ENCODE measurements at regions of chr12 and their contacts with region 1.

Region 1: GRCh38 chr12:46268590-46269558 is at the start of gene SLC38A1:
- DNase-seq: peak; percentile 77 to 96 (median 88)
- ATAC-seq: peak; percentile 67 to 72
- H3K4me3 Mint-ChIP-seq: no peak within 1 kb of the TSS
- H3K27ac Mint-ChIP-seq: no peak within 1 kb of the TSS
- H3K4me1 Mint-ChIP-seq: peaks cover 19 to 44% (median 38%) of the 10 kb centered on the region in 4 donors
- H3K27me3 Mint-ChIP-seq: no peaks in the 10 kb centered on the region
- polyA plus RNA-seq, gene SLC38A1: 255 to 308 (median 264) TPM

Region 2: GRCh38 chr12:45990468-45991283 is 278.2 kb before region 1 on chr12 and contains the start of gene SCAF11:
- POLR2A ChIA-PET with region 1: interaction called, 37 read pairs
- DNase-seq: peak; percentile 100
- ATAC-seq: peak; percentile 71 to 76
- H3K4me3 Mint-ChIP-seq: peak within 1 kb of the TSS; percentile 89 to 100 (median 96)
- H3K27ac Mint-ChIP-seq: peak within 1 kb of the TSS; percentile 93 to 100 (median 100)
- H3K4me1 Mint-ChIP-seq: peaks cover 33 to 52% (median 43%) of the 10 kb centered on the region in 4 donors
- H3K27me3 Mint-ChIP-seq: peaks cover 0 to 4% (median 0%) of the 10 kb centered on the region in 5 donors
- polyA plus RNA-seq, gene SCAF11: 71.1 to 93.5 (median 89.1) TPM

Region 3: GRCh38 chr12:46177837-46178608 is 90.9 kb before region 1 on chr12:
- POLR2A ChIA-PET with region 1: interaction called, 11 read pairs
- DNase-seq: peak in 6 of 10 donors; percentile 23 to 67 (median 35)
- ATAC-seq: peak; percentile 77 to 92
- H3K4me3 Mint-ChIP-seq: peak overlapping the region; percentile 19 to 81 (median 71)
- H3K27ac Mint-ChIP-seq: peak overlapping the region; percentile 8 to 95 (median 82)
- H3K4me1 Mint-ChIP-seq: peaks cover 27 to 77% (median 56%) of the 10 kb centered on the region in 4 donors
- H3K27me3 Mint-ChIP-seq: no peaks in the 10 kb centered on the region

Region 4: DNA sequence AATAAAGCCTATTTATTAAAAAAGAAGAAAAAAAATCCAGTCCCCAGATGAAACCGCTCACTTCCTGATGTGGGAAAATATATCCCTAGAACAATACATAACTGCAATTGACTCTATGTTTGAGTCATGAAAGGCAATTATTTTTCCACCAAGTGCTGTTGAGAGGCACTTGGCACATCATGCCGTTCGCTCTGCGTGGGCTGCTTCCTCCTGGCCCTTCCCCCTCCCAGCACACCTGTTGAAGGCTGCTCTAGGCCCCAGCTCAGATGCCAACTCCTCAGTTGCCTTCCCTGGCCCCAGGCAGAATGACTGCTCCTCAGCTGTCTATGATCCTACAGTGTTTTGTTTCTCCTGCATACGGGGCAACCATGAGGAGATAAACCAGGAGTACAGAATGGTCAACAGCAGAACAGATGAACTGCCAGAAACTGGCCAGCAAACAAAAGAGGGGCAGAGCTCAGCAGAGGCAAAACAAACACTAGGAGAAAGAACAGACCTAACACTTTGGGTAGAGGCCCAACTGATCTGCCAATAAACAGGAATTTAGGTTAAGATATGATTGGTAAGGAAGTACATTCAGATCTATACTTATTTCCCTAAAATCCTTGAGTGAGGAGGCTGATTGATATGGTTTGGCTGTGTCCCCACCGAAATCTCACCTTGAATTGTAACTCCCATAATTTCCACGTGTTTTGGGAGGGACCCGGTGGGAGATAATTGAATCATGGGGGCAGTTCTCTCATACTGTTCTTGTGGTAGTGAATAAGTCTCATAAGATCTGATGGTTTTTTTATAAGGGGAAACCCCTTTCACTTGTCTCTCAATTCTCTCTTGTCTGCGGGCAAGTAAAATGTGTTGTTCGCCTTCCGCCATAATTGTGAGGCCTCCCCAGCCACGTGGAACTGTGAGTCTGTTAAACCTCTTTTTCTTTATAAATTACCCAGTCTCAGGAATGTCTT is 58.7 kb before region 1 on chr12:
- POLR2A ChIA-PET with region 1: interaction called, 365 read pairs
- DNase-seq: peak; percentile 53 to 82 (median 62)
- ATAC-seq: peak; percentile 72 to 74
- H3K4me3 Mint-ChIP-seq: peak overlapping the region; percentile 34 to 79 (median 74)
- H3K27ac Mint-ChIP-seq: peak overlapping the region; percentile 97 to 100 (median 98)
- H3K4me1 Mint-ChIP-seq: peaks cover 40 to 98% (median 90%) of the 10 kb centered on the region in 4 donors
- H3K27me3 Mint-ChIP-seq: no peaks in the 10 kb centered on the region

Region 5: GRCh38 chr12:46224386-46224785 is 44.5 kb before region 1 on chr12:
- POLR2A ChIA-PET with region 1: interaction called, 365 read pairs
- DNase-seq: no peak
- ATAC-seq: no peak
- H3K4me3 Mint-ChIP-seq: peak overlapping the region in 7 of 10 donors; percentile 7 to 42 (median 32)
- H3K27ac Mint-ChIP-seq: peak overlapping the region; percentile 54 to 97 (median 86)
- H3K4me1 Mint-ChIP-seq: peaks cover 29 to 93% (median 86%) of the 10 kb centered on the region in 4 donors
- H3K27me3 Mint-ChIP-seq: no peaks in the 10 kb centered on the region

Region 6: DNA sequence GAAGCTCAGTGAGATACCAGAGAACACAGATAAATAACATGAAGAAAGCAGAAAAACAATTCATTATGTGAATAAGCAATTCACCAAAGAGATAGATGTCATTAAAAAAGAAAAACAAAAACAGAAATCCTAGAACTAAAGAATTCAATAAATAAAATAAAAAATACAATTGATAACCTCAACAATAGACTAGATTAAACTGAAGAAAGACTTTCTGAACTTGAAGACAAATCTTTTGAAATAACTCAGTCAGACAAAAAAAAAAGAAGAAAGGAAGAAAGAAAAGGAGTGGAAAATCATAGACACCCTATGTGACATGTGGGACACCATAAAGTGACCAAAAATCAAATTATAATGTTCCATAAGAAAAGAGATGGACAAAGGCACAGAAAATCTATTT is 14.0 kb after region 1 on chr12:
- POLR2A ChIA-PET with region 1: interaction called, 70 read pairs
- DNase-seq: no peak
- ATAC-seq: no peak
- H3K4me3 Mint-ChIP-seq: peak overlapping the region in 2 of 10 donors; percentile 12 to 30
- H3K27ac Mint-ChIP-seq: no peak overlapping the region
- H3K4me1 Mint-ChIP-seq: peaks cover 0 to 7% (median 3%) of the 10 kb centered on the region in 4 donors
- H3K27me3 Mint-ChIP-seq: no peaks in the 10 kb centered on the region

Region 7: DNA sequence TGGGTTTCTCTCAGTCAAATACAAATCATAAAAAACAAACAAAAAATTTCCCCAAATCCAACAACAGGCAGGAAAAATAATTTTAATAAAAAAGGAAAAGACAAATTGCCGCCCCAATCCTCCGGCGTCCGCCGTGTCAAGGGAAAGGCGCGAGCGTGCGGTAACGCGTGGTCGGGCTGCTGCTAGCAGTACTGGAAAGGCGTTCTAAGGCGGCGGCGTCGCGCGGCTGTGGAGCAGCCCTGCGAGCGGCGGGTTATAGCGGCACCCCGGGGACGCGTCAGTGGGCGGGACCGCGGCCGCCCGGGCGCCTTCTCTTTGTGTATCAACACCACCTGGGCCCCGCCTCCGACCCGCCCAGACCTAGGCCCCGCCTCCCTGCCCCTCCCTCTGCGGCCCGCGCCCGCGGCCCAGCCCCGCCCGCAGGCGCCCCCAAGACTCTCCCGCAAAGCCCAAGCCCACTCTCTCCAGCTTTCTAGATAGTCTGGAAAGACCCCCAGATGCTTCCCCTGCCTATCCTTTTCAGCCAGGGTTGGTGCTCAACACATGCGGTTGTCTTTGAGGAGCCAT is 103.8 kb after region 1 on chr12 and contains the start of gene SLC38A2:
- POLR2A ChIA-PET with region 1: interaction called, 57 read pairs
- DNase-seq: peak; percentile 94 to 99 (median 96)
- ATAC-seq: peak; percentile 77 to 85
- H3K4me3 Mint-ChIP-seq: peak within 1 kb of the TSS; percentile 86 to 99 (median 98)
- H3K27ac Mint-ChIP-seq: peak within 1 kb of the TSS; percentile 85 to 100 (median 99)
- H3K4me1 Mint-ChIP-seq: peaks cover 19 to 60% (median 48%) of the 10 kb centered on the region in 4 donors
- H3K27me3 Mint-ChIP-seq: peaks cover 0 to 3% (median 0%) of the 10 kb centered on the region in 5 donors
- polyA plus RNA-seq, gene SLC38A2: 52.0 to 96.1 (median 57.4) TPM

Region 8: GRCh38 chr12:46419675-46420074 is 150.8 kb after region 1 on chr12:
- POLR2A ChIA-PET with region 1: no interaction called
- DNase-seq: no peak
- ATAC-seq: no peak
- H3K4me3 Mint-ChIP-seq: no peak overlapping the region
- H3K27ac Mint-ChIP-seq: no peak overlapping the region
- H3K4me1 Mint-ChIP-seq: peaks cover 0 to 8% (median under 1%) of the 10 kb centered on the region in 4 donors
- H3K27me3 Mint-ChIP-seq: no peaks in the 10 kb centered on the region